ENCODE measurements at regions of chr1 and their contacts with region 1.

Region 1: GRCh38 chr1:115595279-115596079 is 46.3 kb upstream of the VANGL1 start:
- H3K4me3 Mint-ChIP-seq: no peak overlapping the region
- H3K27ac Mint-ChIP-seq: no peak overlapping the region
- H3K4me1 Mint-ChIP-seq: no peaks in the 10 kb centered on the region
- H3K27me3 Mint-ChIP-seq: no peaks in the 10 kb centered on the region

Region 2: DNA sequence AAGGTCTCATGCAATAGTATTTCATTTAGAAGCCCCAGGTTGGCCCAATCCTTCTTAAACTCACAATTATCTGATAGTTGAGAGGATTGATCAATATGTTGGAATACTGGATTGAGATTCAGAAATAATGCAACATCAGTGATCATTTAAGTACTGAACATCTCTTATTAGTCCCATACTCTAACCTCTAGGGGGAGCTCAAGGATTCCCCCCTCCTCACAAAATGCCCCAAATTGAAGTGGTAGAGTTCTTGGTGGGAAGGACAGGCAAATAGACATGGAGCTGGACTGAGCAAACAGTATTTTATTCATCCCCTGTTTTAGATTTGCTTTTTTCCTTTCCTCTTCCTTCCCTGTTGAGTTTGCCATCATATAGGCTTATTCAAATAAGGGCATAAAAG is 320.3 kb before region 1 on chr1:
- intact Hi-C with region 1: loop called (anchors 1 kb)
- H3K4me3 Mint-ChIP-seq: no peak overlapping the region
- H3K27ac Mint-ChIP-seq: no peak overlapping the region
- H3K4me1 Mint-ChIP-seq: no peaks in the 10 kb centered on the region
- H3K27me3 Mint-ChIP-seq: no peaks in the 10 kb centered on the region

Region 3: GRCh38 chr1:115685029-115685705 is 89.7 kb after region 1 on chr1:
- intact Hi-C with region 1: no loop called
- H3K4me3 Mint-ChIP-seq: no peak overlapping the region
- H3K27ac Mint-ChIP-seq: no peak overlapping the region
- H3K4me1 Mint-ChIP-seq: no peaks in the 10 kb centered on the region
- H3K27me3 Mint-ChIP-seq: no peaks in the 10 kb centered on the region

Region 4: DNA sequence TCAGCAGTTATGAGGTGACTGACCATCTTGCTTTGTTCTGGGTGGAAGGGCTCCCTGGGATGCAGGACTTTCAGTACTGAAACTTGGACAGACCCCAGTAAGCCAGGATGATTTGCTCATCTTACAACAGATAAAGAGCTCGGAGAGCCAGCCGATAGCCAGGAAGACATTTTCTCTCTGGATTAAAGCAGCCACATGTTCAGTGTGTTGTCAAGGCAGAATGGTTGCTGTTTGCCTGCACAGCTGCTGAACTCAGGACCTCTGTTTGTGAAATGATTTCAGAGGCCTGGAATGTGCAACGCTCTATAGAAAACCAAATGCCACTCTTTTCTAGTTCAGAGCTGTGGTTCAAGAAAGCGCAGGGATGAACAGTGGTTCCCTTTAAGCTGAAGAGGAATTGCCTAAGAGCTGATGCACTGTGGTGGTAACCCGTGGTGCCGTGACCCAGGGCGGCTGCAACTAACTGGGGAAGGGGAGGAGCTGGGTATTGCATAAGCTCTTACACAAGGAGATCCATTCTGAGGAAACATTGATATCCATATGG is 132.3 kb after region 1 on chr1:
- intact Hi-C with region 1: no loop called
- H3K4me3 Mint-ChIP-seq: no peak overlapping the region
- H3K27ac Mint-ChIP-seq: peak overlapping the region; percentile 85
- H3K4me1 Mint-ChIP-seq: peaks cover 58% of the 10 kb centered on the region
- H3K27me3 Mint-ChIP-seq: no peaks in the 10 kb centered on the region

Region 5: GRCh38 chr1:116418091-116418830 is 822.8 kb after region 1 on chr1:
- intact Hi-C with region 1: no loop called
- H3K4me3 Mint-ChIP-seq: peak overlapping the region; percentile 86
- H3K27ac Mint-ChIP-seq: peak overlapping the region; percentile 79
- H3K4me1 Mint-ChIP-seq: peaks cover 12% of the 10 kb centered on the region
- H3K27me3 Mint-ChIP-seq: peaks cover 7% of the 10 kb centered on the region

Measured in dendritic cell treated with granulocyte-macrophage colony-stimulating factor and Interleukin-4, amounts not matched to agents 40 ng/mL and 50 ng/mL, for 4 days (primary cell).